Posterior vena cava (tissue), 2 donors: ENCODE measurements at regions of chr9 and their contacts with region 1.

Region 1: DNA sequence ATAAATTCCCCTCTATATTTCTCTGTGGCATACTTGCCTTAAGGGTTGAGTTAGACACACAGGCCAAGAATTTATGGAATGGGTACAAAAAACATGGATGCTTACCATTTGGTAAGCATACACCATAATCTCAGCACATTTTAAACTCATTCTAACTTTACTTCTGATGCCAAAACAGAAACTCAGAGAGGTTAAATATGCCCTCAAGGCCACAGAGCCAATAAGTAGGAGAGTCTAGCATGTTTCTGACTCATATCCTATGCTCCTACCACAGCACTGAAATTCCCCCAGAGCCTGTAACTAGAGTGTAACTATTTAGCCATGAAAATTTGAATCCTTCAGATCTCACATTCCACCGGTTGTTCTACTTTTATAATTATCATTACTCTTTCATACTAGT is 559.7 kb downstream of the ACTL7B start:
- DNase-seq: no peak

Region 2: GRCh38 chr9:108322326-108323098 is 26.5 kb after region 1 on chr9:
- intact Hi-C with region 1: loop called in 1 of 2 experiments (anchors 1 kb)
- DNase-seq: no peak

Region 3: DNA sequence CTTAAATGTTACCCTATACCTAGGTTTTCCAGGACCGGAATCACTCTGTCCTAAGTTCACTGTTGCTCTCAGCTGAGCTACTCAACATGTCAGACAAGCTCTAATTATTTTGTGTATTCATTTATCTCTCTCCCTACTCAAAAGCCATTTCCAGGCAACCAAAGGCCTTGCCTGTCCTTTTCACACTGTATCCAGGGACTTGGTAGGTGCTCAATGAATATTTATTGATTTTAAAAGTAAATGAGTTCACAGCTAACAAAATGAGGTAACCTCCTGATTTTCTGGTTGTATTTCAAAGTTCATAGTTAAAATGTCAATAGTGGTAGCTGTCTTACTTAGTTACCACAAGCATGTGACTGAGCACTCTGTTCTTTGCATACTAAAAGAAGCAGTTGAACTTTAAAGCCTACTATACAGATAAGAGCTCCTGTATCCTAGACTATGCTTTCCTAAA is 37.5 kb after region 1 on chr9:
- intact Hi-C with region 1: no loop called
- DNase-seq: no peak